ENCODE measurements at regions of chr9 and their contacts with region 1.

Region 1: DNA sequence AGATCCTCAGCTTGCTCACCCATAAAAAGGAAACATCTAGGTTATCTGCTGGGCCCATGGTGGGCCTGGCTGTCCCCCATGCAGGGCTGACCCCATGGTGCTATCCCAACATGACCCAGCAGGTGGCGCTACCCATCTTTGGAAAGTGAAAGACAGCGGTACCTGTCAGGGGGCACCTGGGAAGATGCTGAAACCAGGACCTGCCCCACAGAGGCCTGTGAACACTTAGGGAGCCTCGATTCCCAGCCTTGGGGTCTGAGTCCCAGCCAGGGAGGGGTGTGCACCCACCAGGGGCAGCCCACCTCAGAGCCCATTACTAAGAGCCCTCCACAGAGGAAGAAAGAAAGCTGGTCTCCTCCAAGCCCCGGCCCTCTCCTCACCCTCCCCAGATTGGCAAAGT is 46.6 kb upstream of the IPPK start:
- DNase-seq: peak; percentile 66
- H3K4me3 ChIP-seq: no peak overlapping the region
- H3K27ac ChIP-seq: peak overlapping the region; percentile 80
- H3K4me1 ChIP-seq: peaks cover 33% of the 10 kb centered on the region
- H3K27me3 ChIP-seq: no peaks in the 10 kb centered on the region
- CTCF ChIP-seq: peak; percentile 95

Region 2: DNA sequence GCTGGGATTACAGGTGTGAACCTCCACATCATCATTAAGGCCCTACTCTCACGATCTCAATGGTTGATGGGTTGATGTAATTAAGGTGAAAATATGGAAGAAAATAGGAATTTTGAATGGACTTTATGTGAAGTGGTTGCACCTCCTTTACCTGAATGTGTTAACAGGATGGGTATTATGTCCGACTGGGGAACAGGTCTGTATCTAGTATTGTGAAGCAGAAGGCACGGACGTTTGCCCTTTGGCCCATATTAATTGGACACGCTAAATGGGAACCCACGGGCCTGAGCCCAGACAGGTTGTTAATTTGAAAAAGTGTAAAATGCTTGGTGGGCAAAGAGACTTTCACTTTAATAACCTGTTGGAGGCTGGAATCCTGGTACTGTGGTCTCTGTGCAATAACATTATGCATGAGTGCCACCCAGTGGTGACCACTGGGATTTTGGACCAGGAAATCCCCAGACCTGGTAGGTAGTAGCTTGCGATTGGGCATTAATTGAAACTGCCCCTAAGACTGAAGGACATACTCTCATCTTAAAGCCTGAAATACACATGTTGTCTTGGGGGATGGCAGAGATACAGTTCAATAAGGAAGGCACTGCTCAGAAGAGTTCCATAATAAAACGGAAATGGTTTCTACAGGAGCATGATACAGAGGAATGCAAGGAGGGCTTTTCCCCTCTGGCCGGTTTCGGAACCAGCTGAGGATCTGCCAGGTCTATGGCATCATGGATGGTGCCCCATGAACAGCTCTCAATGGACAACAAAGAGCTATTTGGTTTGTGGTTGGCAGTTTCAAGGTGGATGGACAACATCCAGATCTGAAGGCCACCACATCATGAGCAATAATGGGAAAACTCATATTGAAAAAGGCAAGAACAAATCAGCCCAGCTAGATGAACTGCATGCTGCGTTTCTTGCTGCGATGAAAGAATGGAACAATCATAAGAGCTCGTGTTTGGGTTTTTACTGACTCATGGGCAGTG is 74.3 kb after region 1 on chr9:
- intact Hi-C with region 1: loop called (anchors 5 kb)
- DNase-seq: peak; percentile 75
- H3K4me3 ChIP-seq: no peak overlapping the region
- H3K27ac ChIP-seq: no peak overlapping the region
- H3K4me1 ChIP-seq: no peaks in the 10 kb centered on the region
- H3K27me3 ChIP-seq: peaks cover 20% of the 10 kb centered on the region
- CTCF ChIP-seq: peak; percentile 86

Region 3: GRCh38 chr9:92942688-92943616 is 226.4 kb after region 1 on chr9:
- intact Hi-C with region 1: no loop called
- DNase-seq: peak; percentile 32
- H3K4me3 ChIP-seq: no peak overlapping the region
- H3K27ac ChIP-seq: no peak overlapping the region
- H3K4me1 ChIP-seq: peaks cover 11% of the 10 kb centered on the region
- H3K27me3 ChIP-seq: peaks cover 42% of the 10 kb centered on the region
- CTCF ChIP-seq: no peak